Activated CD8-positive, alpha-beta T cell treated with anti-CD3 and anti-CD28 coated beads, Interleukin-2, amount 10 ng/mL, durations not matched to agents 7 days and 5 days (primary cell): ENCODE measurements at regions of chr19 and their contacts with region 1.

Region 1: DNA sequence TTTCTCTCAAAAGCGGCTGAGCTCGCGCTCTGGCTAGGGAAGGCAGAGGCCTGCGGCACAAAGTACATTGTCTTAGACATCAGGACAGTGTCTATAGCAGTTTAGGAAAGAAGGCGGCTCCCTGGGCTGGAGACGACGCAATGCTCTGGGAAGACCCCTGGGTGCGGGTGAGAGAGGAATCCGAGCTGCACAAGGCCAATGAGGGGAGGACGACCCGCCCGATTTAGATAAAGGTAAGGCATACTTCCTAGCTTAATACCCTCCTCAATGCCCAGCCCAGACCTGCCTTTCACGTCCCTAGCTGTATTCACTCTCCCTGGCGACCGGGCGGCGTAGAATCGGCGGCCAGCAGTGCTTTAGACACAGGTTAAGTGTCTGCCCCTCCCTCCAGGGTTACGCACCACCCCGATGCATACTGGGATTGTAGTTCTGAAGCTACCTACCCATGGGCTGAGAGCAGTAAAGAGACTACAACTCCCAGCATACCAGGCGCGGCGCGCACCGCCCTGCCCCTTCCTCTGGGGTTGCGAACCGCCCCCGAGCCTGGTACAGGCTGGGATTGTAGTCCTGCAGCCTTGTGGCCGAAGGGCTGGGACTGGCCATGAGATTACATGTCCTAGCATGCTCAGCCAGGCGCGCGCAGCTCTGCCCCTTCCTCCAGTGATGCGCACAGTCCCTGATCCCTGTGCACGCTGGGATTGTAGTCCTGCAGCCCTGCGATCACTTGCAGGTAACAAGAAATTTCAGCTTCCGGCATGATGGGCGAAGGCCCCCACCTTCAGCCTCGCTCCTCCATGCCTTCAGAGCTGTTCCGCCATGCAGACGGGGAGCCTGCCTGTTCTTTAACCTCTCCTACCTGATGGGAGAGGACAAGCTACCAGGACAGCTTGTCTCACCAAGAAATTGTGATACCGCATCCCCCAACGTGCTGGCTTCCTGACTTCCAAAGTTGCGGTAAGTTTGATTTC is 43.4 kb upstream of the ZNF14 start:
- DNase-seq: peak; percentile 96
- ATAC-seq: peak; percentile 99
- H3K4me3 Mint-ChIP-seq: peak overlapping the region; percentile 93
- H3K27ac Mint-ChIP-seq: peak overlapping the region; percentile 94
- H3K4me1 Mint-ChIP-seq: peaks cover 48% of the 10 kb centered on the region
- H3K27me3 Mint-ChIP-seq: no peaks in the 10 kb centered on the region

Region 2: DNA sequence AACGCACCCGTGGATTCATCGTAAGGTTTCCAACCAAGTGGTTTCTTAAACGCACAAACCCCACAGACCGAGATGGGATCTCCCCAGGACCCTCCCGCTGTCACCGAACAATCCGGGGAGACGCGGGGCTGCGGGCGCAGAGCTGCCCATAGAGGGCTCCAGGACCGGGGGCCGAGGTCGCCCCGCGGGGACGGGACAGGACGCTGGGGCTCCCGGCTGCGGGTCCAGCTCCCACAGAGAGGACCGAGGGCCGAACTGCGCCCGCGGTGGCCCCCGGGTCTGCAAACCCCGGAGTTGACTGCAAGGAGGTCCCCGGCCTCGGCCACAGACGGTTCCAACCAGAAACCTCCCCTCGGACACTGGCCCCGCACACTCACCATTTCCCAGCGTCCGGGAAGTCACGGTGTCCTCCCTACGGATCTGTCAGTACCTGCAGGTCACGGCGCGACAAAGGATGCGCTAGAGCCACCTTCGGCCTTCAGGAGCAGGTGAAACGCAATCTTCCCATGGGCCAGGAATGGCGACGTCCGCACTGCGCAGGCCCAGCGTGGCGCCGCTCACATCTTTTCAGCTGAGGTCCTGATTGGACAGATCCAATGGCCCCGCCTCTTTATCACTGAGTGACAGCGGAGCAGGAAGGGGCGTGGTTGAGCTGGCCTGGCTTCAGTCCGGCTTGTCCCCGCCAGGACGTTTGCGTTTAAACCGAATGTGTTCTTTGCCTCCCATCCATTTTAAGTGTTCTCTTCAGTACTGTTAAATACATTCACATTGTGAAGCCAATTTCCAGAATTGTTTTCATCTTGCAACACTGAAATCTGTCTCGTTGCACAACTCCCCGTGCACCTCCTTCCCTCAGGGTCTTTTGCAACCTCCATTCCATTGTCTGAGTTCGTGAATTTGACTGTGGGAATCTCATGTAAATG is 43.5 kb before region 1 on chr19 and contains the start of gene ZNF14:
- CTCF ChIA-PET with region 1: interaction called, 4 read pairs
- POLR2A ChIA-PET with region 1: interaction called, 11 read pairs
- DNase-seq: peak; percentile 96
- ATAC-seq: peak; percentile 99
- H3K4me3 Mint-ChIP-seq: peak within 1 kb of the TSS; percentile 97
- H3K27ac Mint-ChIP-seq: peak within 1 kb of the TSS; percentile 94
- H3K4me1 Mint-ChIP-seq: peaks cover 18% of the 10 kb centered on the region
- H3K27me3 Mint-ChIP-seq: no peaks in the 10 kb centered on the region
- total RNA-seq, gene ZNF14: 6.9 TPM

Region 3: GRCh38 chr19:19865739-19866481 is 89.6 kb after region 1 on chr19 and contains the start of gene ZNF253:
- CTCF ChIA-PET with region 1: interaction called, 5 read pairs
- POLR2A ChIA-PET with region 1: interaction called, 23 read pairs
- DNase-seq: peak; percentile 99
- ATAC-seq: peak; percentile 96
- H3K4me3 Mint-ChIP-seq: peak within 1 kb of the TSS; percentile 100
- H3K27ac Mint-ChIP-seq: peak within 1 kb of the TSS; percentile 100
- H3K4me1 Mint-ChIP-seq: peaks cover 32% of the 10 kb centered on the region
- H3K27me3 Mint-ChIP-seq: no peaks in the 10 kb centered on the region
- total RNA-seq, gene ZNF253: 15.7 to 17.5 TPM

Region 4: GRCh38 chr19:19900729-19901444 is 124.6 kb after region 1 on chr19 and contains the start of gene ZNF93:
- CTCF ChIA-PET with region 1: no interaction called
- POLR2A ChIA-PET with region 1: interaction called, 17 read pairs
- DNase-seq: peak; percentile 96
- ATAC-seq: peak; percentile 96
- H3K4me3 Mint-ChIP-seq: peak within 1 kb of the TSS; percentile 97
- H3K27ac Mint-ChIP-seq: peak within 1 kb of the TSS; percentile 98
- H3K4me1 Mint-ChIP-seq: peaks cover 40% of the 10 kb centered on the region
- H3K27me3 Mint-ChIP-seq: no peaks in the 10 kb centered on the region
- total RNA-seq, gene ZNF93: 15.8 to 17.9 TPM